Naive thymus-derived CD4-positive, alpha-beta T cell (primary cell): ENCODE measurements at regions of chr6 and their contacts with region 1.

Region 1: GRCh38 chr6:13454286-13455221 is 32.8 kb downstream of the GFOD1 start:
- DNase-seq: peak; percentile 27 to 83 (median 59)
- ATAC-seq: peak; percentile 88
- H3K4me3 ChIP-seq: peak overlapping the region; percentile 21
- H3K4me3 Mint-ChIP-seq: peak overlapping the region; percentile 63 to 85 (median 74)
- H3K27ac ChIP-seq: peak overlapping the region; percentile 16
- H3K27ac Mint-ChIP-seq: peak overlapping the region; percentile 66 to 93 (median 84)
- H3K4me1 ChIP-seq: peaks cover 17 to 23% of the 10 kb centered on the region in 2 donors
- H3K4me1 Mint-ChIP-seq: peaks cover 15 to 58% (median 28%) of the 10 kb centered on the region in 7 donors
- H3K27me3 ChIP-seq: no peaks in the 10 kb centered on the region
- H3K27me3 Mint-ChIP-seq: no peaks in the 10 kb centered on the region

Region 2: GRCh38 chr6:12034835-12035234 is 1419.7 kb before region 1 on chr6:
- CTCF ChIA-PET with region 1: no interaction called
- POLR2A ChIA-PET with region 1: no interaction called
- intact Hi-C with region 1: no loop called
- DNase-seq: no peak
- ATAC-seq: no peak
- H3K4me3 ChIP-seq: no peak overlapping the region
- H3K4me3 Mint-ChIP-seq: peak overlapping the region in 1 of 10 donors; percentile 32
- H3K27ac ChIP-seq: no peak overlapping the region
- H3K27ac Mint-ChIP-seq: peak overlapping the region in 2 of 9 donors; percentile 13 to 42
- H3K4me1 ChIP-seq: peaks cover 0 to 26% of the 10 kb centered on the region in 2 donors
- H3K4me1 Mint-ChIP-seq: peaks cover 49 to 87% (median 82%) of the 10 kb centered on the region in 7 donors
- H3K27me3 ChIP-seq: no peaks in the 10 kb centered on the region
- H3K27me3 Mint-ChIP-seq: no peaks in the 10 kb centered on the region

Region 3: DNA sequence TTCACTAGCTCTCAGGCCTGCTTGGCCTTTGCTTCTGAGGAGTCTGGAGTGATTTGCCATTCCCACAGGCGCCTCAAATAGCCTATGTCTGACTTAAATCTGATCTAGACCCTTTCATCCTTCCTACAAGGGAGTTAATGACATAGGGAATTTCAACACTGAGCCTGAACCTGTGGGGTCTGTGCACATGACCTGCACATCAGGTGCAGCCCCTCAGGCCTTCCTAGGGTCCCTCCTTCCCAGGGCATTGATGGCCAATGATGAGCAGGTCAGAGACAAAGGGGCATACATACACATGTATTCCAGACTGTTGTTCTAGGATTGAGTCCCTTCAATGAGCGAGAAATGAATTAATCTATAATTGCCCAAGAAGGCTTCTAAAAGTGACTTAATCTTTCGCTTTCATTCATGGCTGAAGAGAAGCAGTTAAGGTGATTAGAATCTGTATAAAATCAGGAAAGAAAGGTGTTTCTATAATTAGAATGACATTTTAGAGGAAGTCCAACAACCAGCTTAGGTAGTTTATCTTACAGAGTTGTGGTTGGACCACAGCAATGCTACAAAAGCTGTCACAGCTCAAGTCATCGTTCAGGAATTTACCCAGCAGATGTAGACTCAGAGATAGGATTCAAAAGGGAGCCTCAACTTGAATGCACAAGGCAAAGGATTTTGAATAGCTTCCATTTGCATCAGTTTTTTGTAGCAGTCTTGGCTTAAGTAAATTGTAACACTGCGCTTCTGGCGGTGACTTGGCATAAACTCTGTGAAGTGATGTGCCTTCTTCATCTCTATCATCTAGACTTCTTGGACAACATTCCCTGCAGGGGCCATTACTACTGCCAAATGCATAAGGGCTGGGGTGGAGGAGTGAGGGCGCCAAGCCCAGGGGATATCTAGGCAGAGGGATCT is 99.3 kb before region 1 on chr6:
- CTCF ChIA-PET with region 1: no interaction called
- POLR2A ChIA-PET with region 1: no interaction called
- intact Hi-C with region 1: loop called in 1 of 2 experiments (anchors 1 kb)
- DNase-seq: peak in 8 of 9 donors; percentile 10 to 42 (median 30)
- ATAC-seq: peak; percentile 75
- H3K4me3 ChIP-seq: peak overlapping the region; percentile 22
- H3K4me3 Mint-ChIP-seq: peak overlapping the region; percentile 78 to 91 (median 80)
- H3K27ac ChIP-seq: peak overlapping the region; percentile 46
- H3K27ac Mint-ChIP-seq: peak overlapping the region; percentile 71 to 98 (median 85)
- H3K4me1 ChIP-seq: peaks cover 27 to 32% of the 10 kb centered on the region in 2 donors
- H3K4me1 Mint-ChIP-seq: peaks cover 33 to 56% (median 46%) of the 10 kb centered on the region in 7 donors
- H3K27me3 ChIP-seq: no peaks in the 10 kb centered on the region
- H3K27me3 Mint-ChIP-seq: no peaks in the 10 kb centered on the region

Region 4: DNA sequence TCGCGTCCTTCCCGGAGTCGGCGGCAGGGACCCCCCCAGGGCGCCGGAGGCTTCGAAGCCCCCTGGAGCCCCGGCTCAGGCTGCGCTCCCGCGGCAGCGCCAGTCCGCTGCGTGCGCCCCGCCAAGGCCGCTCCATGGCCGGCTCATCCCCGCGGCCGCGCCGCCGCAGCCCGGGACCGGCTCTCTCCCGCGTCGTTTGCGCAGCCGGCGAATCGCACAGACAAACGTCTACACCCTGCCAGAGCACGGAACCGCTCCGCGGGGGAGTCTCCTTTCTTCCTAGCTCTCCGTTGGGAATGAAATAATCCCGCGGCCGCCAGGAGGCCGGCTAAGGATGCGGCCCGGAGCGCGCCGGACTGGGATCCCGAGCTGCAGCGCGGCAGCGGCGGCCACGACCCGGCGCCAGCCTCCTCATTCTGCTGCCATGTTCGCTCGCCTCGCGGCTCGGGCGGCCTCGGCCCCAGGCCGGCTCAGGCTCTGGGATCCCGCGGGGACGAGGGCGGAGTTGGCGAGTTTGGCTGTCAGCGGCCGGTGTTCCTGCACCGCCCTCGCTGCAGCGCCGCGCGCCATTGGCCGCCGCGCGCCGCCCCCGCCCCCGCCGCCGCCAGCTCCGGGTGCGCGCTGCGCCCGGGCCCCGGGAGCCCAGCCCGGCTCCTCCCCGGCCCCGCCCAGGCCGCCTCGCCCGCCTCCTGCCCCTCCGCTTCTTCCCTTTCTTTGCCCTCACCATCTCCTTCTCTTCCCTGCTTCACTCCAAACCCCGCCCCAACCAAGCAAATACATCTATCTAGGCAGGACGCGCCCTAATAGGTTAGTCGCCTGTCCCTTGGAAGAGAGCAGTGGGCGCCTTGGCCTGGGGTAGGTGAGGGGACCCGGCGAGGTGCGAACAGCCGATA is 32.8 kb after region 1 on chr6 and contains the start of gene GFOD1:
- CTCF ChIA-PET with region 1: no interaction called
- POLR2A ChIA-PET with region 1: interaction called, 4 read pairs
- intact Hi-C with region 1: loop called (anchors 1 kb)
- DNase-seq: peak; percentile 33 to 87 (median 54)
- ATAC-seq: peak; percentile 90
- H3K4me3 ChIP-seq: peak within 1 kb of the TSS; percentile 80
- H3K4me3 Mint-ChIP-seq: peak within 1 kb of the TSS; percentile 78 to 96 (median 92)
- H3K27ac ChIP-seq: peak within 1 kb of the TSS; percentile 23
- H3K27ac Mint-ChIP-seq: peak within 1 kb of the TSS in 7 of 9 donors; percentile 35 to 76 (median 65)
- H3K4me1 ChIP-seq: peaks cover 4 to 9% of the 10 kb centered on the region in 2 donors
- H3K4me1 Mint-ChIP-seq: peaks cover 23 to 40% (median 30%) of the 10 kb centered on the region in 7 donors
- H3K27me3 ChIP-seq: no peaks in the 10 kb centered on the region
- H3K27me3 Mint-ChIP-seq: peaks cover 0 to 14% (median 12%) of the 10 kb centered on the region in 5 donors
- total RNA-seq, gene GFOD1: 0.73 to 10.8 (median 2.0) TPM

Region 5: GRCh38 chr6:13538084-13538483 is 83.5 kb after region 1 on chr6:
- CTCF ChIA-PET with region 1: interaction called, 28 read pairs
- POLR2A ChIA-PET with region 1: no interaction called
- intact Hi-C with region 1: loop called (anchors 1 kb)
- DNase-seq: peak in 5 of 9 donors; percentile 18 to 38 (median 25)
- ATAC-seq: no peak
- H3K4me3 ChIP-seq: no peak overlapping the region
- H3K4me3 Mint-ChIP-seq: no peak overlapping the region
- H3K27ac ChIP-seq: no peak overlapping the region
- H3K27ac Mint-ChIP-seq: no peak overlapping the region
- H3K4me1 ChIP-seq: no peaks in the 10 kb centered on the region
- H3K4me1 Mint-ChIP-seq: peaks cover 0 to 3% (median 0%) of the 10 kb centered on the region in 7 donors
- H3K27me3 ChIP-seq: no peaks in the 10 kb centered on the region
- H3K27me3 Mint-ChIP-seq: no peaks in the 10 kb centered on the region

Region 6: GRCh38 chr6:13624871-13625288 is 170.3 kb after region 1 on chr6:
- CTCF ChIA-PET with region 1: no interaction called
- POLR2A ChIA-PET with region 1: no interaction called
- intact Hi-C with region 1: loop called in 1 of 2 experiments (anchors 2 kb)
- DNase-seq: peak in 6 of 9 donors; percentile 14 to 50 (median 40)
- ATAC-seq: peak; percentile 88
- H3K4me3 ChIP-seq: no peak overlapping the region
- H3K4me3 Mint-ChIP-seq: no peak overlapping the region
- H3K27ac ChIP-seq: no peak overlapping the region
- H3K27ac Mint-ChIP-seq: peak overlapping the region in 8 of 9 donors; percentile 23 to 88 (median 58)
- H3K4me1 ChIP-seq: no peaks in the 10 kb centered on the region
- H3K4me1 Mint-ChIP-seq: peaks cover 0 to 27% (median 12%) of the 10 kb centered on the region in 7 donors
- H3K27me3 ChIP-seq: no peaks in the 10 kb centered on the region
- H3K27me3 Mint-ChIP-seq: no peaks in the 10 kb centered on the region

Region 7: DNA sequence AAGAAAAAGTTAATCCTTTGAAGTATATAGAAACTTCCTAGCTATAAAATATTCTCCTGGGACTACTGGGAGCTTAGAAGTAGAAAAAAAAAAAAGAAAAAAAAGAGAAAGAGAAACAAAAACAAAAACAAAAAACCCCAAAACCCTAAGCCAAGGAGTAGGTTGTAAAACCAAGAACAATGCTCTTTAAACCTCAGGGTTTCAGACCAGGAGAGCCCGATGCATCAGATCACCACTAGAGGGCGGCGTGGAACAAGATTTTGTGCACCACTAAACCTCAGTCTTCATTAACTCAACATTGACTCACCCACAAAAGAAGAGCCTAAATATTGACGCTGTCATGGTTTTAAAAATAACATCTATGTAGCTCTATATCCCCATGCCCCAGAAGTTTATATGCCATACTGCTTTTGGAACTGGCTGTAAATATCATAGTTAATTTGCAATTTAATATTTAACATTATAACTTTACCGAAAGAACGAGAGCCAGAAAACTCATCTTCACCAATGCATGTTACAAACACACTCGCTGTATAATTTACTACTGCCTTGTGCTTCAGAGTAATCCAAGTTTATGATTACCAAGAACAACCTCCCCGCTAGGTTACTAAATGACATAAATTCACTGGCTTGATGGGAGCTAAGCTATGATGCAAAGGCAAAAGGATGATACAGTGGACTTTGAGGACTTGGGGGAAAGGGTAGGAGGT is 340.6 kb after region 1 on chr6:
- CTCF ChIA-PET with region 1: no interaction called
- POLR2A ChIA-PET with region 1: interaction called, 6 read pairs
- intact Hi-C with region 1: loop called in 1 of 2 experiments (anchors 1 kb)
- DNase-seq: peak; percentile 54 to 80 (median 77)
- ATAC-seq: peak; percentile 98
- H3K4me3 ChIP-seq: no peak overlapping the region
- H3K4me3 Mint-ChIP-seq: no peak overlapping the region
- H3K27ac ChIP-seq: no peak overlapping the region
- H3K27ac Mint-ChIP-seq: peak overlapping the region in 5 of 9 donors; percentile 7 to 50 (median 27)
- H3K4me1 ChIP-seq: no peaks in the 10 kb centered on the region
- H3K4me1 Mint-ChIP-seq: peaks cover 5 to 16% (median 6%) of the 10 kb centered on the region in 7 donors
- H3K27me3 ChIP-seq: no peaks in the 10 kb centered on the region
- H3K27me3 Mint-ChIP-seq: no peaks in the 10 kb centered on the region